ENCODE measurements at regions of chr5 and their contacts with region 1.

Region 1: DNA sequence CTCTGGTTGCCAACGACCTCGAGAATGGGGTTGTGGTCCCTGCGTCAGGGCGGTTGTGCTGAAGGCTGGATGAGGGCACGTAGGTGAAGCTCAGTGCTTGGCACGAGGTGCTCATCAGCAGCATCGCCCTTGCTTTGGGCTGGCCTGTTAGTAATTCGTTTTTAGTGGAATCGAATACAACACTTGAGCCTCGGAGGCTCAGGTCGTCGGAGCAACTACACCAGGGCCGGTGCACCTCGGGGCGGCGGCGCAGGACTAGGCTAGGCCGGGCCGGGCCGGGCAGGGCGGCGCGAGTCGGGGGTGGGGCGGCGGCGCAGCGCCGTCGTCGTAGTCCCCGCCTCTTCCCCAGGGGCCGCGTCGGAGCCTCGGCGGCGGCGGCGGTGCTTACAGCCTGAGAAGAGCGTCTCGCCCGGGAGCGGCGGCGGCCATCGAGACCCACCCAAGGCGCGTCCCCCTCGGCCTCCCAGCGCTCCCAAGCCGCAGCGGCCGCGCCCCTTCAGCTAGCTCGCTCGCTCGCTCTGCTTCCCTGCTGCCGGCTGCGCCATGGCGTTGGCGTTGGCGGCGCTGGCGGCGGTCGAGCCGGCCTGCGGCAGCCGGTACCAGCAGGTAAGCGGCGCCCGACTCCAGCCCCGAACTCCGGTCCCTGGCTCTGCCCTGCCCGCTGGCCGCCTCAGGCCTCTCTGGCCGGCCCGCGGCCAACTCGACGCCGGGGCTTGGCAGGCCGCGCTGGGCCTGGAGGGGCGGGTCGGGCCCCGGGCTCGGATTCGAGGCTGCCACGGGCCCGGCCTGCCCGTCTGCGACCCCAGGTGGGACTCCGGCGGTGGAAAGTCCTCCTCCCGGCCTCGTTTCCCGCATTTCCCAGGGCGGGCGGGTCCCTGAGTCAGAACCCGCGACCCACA is at the start of gene NDFIP1:
- DNase-seq: no peak
- H3K4me3 ChIP-seq: peak within 1 kb of the TSS; percentile 61 to 87 (median 76)
- H3K27ac ChIP-seq: peak within 1 kb of the TSS; percentile 92 to 98 (median 98)
- H3K4me1 ChIP-seq: peaks cover 37 to 43% (median 42%) of the 10 kb centered on the region in 4 donors
- H3K27me3 ChIP-seq: no peaks in the 10 kb centered on the region
- CTCF ChIP-seq: peak in 2 of 3 experiments; percentile 25 to 38
- EP300 ChIP-seq: no peak
- POLR2A ChIP-seq: peak; percentile 92
- total RNA-seq, gene NDFIP1: 57.8 to 169 (median 101) TPM

Region 2: GRCh38 chr5:141598391-141599350 is 510.0 kb before region 1 on chr5:
- intact Hi-C with region 1: no loop called
- DNase-seq: no peak
- H3K4me3 ChIP-seq: no peak overlapping the region
- H3K27ac ChIP-seq: peak overlapping the region in 1 of 4 donors; percentile 10
- H3K4me1 ChIP-seq: peaks cover 2 to 41% (median 10%) of the 10 kb centered on the region in 4 donors
- H3K27me3 ChIP-seq: no peaks in the 10 kb centered on the region
- CTCF ChIP-seq: no peak
- EP300 ChIP-seq: no peak
- POLR2A ChIP-seq: no peak

Region 3: DNA sequence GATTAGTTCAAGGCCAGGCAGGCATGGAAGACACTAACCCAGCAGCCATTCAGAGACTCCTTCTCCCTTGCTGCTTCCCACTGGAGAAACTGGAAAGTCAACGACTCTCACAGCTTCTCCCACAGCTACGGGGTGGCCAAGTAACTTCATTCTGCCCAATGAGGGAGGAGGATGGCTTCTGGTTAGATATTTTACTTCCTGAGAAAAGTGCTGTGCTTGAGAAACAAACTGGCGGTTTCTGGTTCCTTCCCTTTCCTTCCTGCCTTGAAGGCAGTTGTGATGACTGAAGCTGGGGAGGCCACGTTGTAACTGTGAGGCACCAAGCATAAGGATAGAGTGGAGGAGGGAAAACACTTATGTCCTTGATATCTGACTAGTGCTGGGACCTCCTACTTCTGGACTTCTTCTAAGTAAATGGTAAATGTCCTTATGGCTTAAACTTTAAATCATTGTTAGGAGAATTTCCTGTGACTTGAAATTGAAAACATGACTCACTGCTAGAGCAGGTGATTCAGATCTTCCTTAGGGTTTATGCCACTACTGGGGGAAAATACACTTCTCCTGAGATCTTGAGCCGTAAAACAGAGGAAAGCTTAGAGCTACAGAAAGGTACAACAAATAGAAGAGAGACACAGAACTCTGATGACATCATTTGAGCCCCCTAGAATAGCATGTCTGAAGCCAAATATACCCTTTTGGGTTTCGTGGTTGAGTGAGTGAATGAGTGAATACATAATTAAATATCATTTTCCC is 92.7 kb before region 1 on chr5:
- intact Hi-C with region 1: loop called (anchors 1 kb)
- DNase-seq: no peak
- H3K4me3 ChIP-seq: no peak overlapping the region
- H3K27ac ChIP-seq: peak overlapping the region; percentile 9 to 52 (median 35)
- H3K4me1 ChIP-seq: peaks cover 8 to 42% (median 29%) of the 10 kb centered on the region in 4 donors
- H3K27me3 ChIP-seq: no peaks in the 10 kb centered on the region
- CTCF ChIP-seq: no peak
- EP300 ChIP-seq: no peak
- POLR2A ChIP-seq: no peak

Region 4: GRCh38 chr5:143086908-143087637 is 978.4 kb after region 1 on chr5:
- intact Hi-C with region 1: no loop called
- DNase-seq: no peak
- H3K4me3 ChIP-seq: no peak overlapping the region
- H3K27ac ChIP-seq: no peak overlapping the region
- H3K4me1 ChIP-seq: peaks cover 4 to 17% (median 14%) of the 10 kb centered on the region in 4 donors
- H3K27me3 ChIP-seq: no peaks in the 10 kb centered on the region
- CTCF ChIP-seq: no peak
- EP300 ChIP-seq: no peak
- POLR2A ChIP-seq: no peak

Measured in esophagus muscularis mucosa (tissue), 4 donors.